ENCODE measurements at regions of chr5 and their contacts with region 1.

Region 1: DNA sequence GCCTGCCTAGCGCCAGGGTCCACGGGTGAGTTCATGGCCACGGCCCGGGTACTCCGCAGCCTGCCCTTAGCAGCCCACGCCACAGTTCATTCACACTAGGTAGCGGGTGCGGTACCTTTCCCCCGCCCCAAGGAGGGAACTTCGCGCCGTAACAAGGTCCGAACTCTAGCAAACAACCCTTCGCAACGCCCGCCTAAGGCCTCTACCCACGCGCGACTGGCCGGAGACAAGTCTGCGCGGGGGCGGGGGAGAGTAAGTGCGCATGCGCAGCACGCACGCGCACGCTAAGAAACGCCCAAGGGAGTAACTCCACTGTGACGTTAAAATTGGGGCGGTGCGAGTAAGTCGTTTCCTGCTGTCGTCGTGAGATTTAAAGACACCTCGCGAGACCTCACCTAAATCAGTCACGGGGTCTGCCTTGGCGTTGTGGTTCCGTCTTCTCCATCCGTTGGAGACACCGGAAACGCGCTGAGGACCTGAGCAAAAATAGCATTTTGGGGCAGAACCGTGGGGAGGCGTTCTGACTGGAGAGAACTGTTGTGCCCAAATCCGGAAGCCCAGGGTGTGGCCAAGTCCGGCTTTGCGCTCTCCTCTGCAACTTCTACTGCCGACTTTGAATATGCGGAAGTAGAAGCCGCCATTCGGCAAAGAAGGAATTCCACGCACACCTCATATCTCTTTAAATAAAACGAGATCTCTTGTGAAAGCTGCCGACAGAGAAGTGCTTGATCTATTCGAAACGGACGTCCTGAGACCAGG is at the start of gene RAPGEF6:
- DNase-seq: peak; percentile 99
- H3K4me3 ChIP-seq: peak within 1 kb of the TSS; percentile 44 to 85 (median 51)
- H3K27ac ChIP-seq: peak within 1 kb of the TSS; percentile 96 to 99 (median 98)
- H3K4me1 ChIP-seq: peaks cover 9 to 26% of the 10 kb centered on the region in 2 donors
- H3K27me3 ChIP-seq: no peaks in the 10 kb centered on the region
- CTCF ChIP-seq: peak in 2 of 6 experiments; percentile 15 to 20
- POLR2A ChIP-seq: peak; percentile 37 to 91
- total RNA-seq, gene RAPGEF6: 20.2 to 36.4 (median 25.2) TPM

Region 2: DNA sequence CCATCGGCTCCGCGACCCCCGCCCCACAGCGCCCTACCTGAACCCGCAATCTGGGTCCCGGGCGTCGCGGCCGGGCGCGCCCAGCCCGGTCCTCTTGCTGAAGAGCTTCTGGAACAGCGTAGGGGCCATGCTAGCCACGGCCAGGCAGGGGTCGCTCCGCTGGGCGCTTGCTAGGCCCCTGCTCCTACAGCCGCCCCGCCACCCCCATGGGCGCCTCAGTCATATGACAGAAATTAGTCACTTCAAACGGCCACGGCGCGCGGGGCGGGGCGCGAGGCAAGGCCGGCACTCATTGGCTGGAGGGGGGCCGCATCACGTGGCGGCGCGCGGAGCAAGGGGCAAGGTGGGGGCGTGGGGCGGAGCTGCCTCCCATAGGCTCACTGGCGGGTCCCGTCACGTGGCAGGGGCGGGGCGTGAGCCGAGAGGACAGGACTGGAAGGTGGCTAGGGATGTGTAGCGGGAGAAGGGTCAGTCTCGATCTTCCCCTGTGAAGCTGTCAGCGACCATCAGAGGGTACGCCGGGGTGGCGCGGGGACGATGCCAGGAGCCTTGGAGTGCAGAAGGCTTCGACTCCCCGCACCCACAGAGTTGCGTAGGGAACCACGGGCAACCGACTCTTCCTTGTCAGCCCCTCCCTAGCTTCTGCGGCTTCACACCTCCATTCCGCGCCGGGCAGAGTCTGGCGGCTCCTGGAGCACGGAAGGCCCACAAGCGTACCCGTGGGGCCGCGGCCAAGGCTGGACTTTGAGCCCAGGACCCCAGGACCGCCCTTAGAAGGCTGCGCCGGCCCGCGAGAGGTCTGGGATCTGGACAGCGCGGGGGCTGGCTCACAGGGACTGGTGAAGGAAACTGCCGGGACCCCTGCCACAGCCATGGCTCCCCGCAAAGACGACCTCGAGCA is 161.9 kb after region 1 on chr5 and contains the start of gene FNIP1:
- intact Hi-C with region 1: loop called (anchors 10 kb)
- DNase-seq: peak; percentile 100
- H3K4me3 ChIP-seq: peak within 1 kb of the TSS; percentile 49 to 98 (median 56)
- H3K27ac ChIP-seq: peak within 1 kb of the TSS; percentile 99 to 100 (median 100)
- H3K4me1 ChIP-seq: peaks cover 6 to 8% of the 10 kb centered on the region in 2 donors
- H3K27me3 ChIP-seq: no peaks in the 10 kb centered on the region
- CTCF ChIP-seq: no peak
- POLR2A ChIP-seq: peak; percentile 88 to 97
- total RNA-seq, gene FNIP1: 55.3 to 91.7 (median 65.3) TPM

Measured in thyroid gland (tissue), 4 donors.